CD8-positive, alpha-beta T cell (primary cell): ENCODE measurements at regions of chr6 and their contacts with region 1.

Region 1: GRCh38 chr6:43059168-43060033 is at the starts of genes KLC4 and MRPL2:
- DNase-seq: peak; percentile 94 to 99 (median 98)
- ATAC-seq: peak; percentile 97
- H3K4me3 ChIP-seq: peak within 1 kb of the TSS; percentile 81 to 96
- H3K4me3 Mint-ChIP-seq: peak within 1 kb of the TSS; percentile 95
- H3K27ac ChIP-seq: peak within 1 kb of the TSS; percentile 84 to 91
- H3K27ac Mint-ChIP-seq: peak within 1 kb of the TSS; percentile 99
- H3K4me1 ChIP-seq: peaks cover 19% of the 10 kb centered on the region
- H3K4me1 Mint-ChIP-seq: peaks cover 44% of the 10 kb centered on the region
- H3K27me3 ChIP-seq: no peaks in the 10 kb centered on the region
- H3K27me3 Mint-ChIP-seq: no peaks in the 10 kb centered on the region
- CTCF ChIP-seq: no peak
- total RNA-seq, gene KLC4: 42.1 to 57.4 TPM
- total RNA-seq, gene MRPL2: 38.9 to 41.6 TPM

Region 2: GRCh38 chr6:41072676-41073623 is 1986.5 kb before region 1 on chr6 and contains the start of gene NFYA:
- CTCF ChIA-PET with region 1: no interaction called
- POLR2A ChIA-PET with region 1: no interaction called
- intact Hi-C with region 1: loop called in 1 of 2 experiments (anchors 5 kb)
- DNase-seq: peak; percentile 99 to 100 (median 100)
- ATAC-seq: peak; percentile 70
- H3K4me3 ChIP-seq: peak within 1 kb of the TSS; percentile 72 to 86
- H3K4me3 Mint-ChIP-seq: peak within 1 kb of the TSS; percentile 92
- H3K27ac ChIP-seq: peak within 1 kb of the TSS; percentile 88 to 89
- H3K27ac Mint-ChIP-seq: peak within 1 kb of the TSS; percentile 95
- H3K4me1 ChIP-seq: peaks cover 37% of the 10 kb centered on the region
- H3K4me1 Mint-ChIP-seq: peaks cover 55% of the 10 kb centered on the region
- H3K27me3 ChIP-seq: no peaks in the 10 kb centered on the region
- H3K27me3 Mint-ChIP-seq: no peaks in the 10 kb centered on the region
- CTCF ChIP-seq: peak; percentile 46
- total RNA-seq, gene NFYA: 31.7 to 32.7 TPM

Region 3: GRCh38 chr6:42901536-42901957 is 157.9 kb before region 1 on chr6:
- CTCF ChIA-PET with region 1: interaction called, 4 read pairs
- POLR2A ChIA-PET with region 1: no interaction called
- intact Hi-C with region 1: loop called in 1 of 2 experiments (anchors 5 kb)
- DNase-seq: peak; percentile 32 to 89 (median 67)
- ATAC-seq: peak; percentile 100
- H3K4me3 ChIP-seq: no peak overlapping the region
- H3K4me3 Mint-ChIP-seq: peak overlapping the region; percentile 63
- H3K27ac ChIP-seq: no peak overlapping the region
- H3K27ac Mint-ChIP-seq: no peak overlapping the region
- H3K4me1 ChIP-seq: peaks cover 6% of the 10 kb centered on the region
- H3K4me1 Mint-ChIP-seq: peaks cover 17% of the 10 kb centered on the region
- H3K27me3 ChIP-seq: no peaks in the 10 kb centered on the region
- H3K27me3 Mint-ChIP-seq: no peaks in the 10 kb centered on the region
- CTCF ChIP-seq: peak; percentile 92

Region 4: GRCh38 chr6:42978839-42979522 is 80.4 kb before region 1 on chr6 and contains the start of gene PEX6:
- CTCF ChIA-PET with region 1: no interaction called
- POLR2A ChIA-PET with region 1: interaction called, 17 read pairs
- intact Hi-C with region 1: loop called (anchors 1 kb)
- DNase-seq: peak; percentile 77 to 98 (median 94)
- ATAC-seq: peak; percentile 89
- H3K4me3 ChIP-seq: peak within 1 kb of the TSS; percentile 49 to 71
- H3K4me3 Mint-ChIP-seq: peak within 1 kb of the TSS; percentile 90
- H3K27ac ChIP-seq: peak within 1 kb of the TSS; percentile 64 to 89
- H3K27ac Mint-ChIP-seq: peak within 1 kb of the TSS; percentile 95
- H3K4me1 ChIP-seq: peaks cover 45% of the 10 kb centered on the region
- H3K4me1 Mint-ChIP-seq: peaks cover 55% of the 10 kb centered on the region
- H3K27me3 ChIP-seq: no peaks in the 10 kb centered on the region
- H3K27me3 Mint-ChIP-seq: no peaks in the 10 kb centered on the region
- CTCF ChIP-seq: no peak
- total RNA-seq, gene PEX6: 6.7 to 6.8 TPM

Region 5: DNA sequence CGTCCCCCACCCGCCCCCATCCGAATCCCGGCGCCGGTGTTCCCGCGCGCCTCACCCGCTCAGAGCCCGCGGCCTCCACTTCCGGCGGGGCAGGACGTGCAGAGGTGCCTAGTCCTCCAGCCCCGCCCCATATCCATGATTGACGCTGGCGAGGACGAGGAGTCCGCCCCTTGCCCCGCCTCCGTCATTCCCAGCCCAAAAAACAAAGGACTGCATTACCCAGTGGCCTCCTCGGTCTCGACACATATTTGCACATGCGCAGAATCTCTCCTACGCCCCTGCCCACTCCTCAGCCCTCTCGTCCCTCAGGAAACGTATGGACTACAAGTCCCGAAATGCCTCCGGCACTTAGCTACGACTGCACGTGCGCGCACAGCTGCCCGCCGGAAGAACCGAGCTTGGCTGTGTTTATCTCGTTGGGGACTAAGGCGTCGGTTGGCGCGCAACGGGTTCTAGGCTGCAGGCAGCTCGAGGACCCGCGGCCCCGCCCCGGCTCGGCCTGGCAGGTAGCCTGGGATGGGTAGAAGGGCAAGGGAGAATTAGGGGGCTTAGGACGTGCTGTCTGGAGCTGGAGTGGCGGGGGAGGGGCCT is 45.5 kb before region 1 on chr6 and contains the starts of genes KLHDC3 and MEA1:
- CTCF ChIA-PET with region 1: interaction called, 4 read pairs
- POLR2A ChIA-PET with region 1: interaction called, 14 read pairs
- intact Hi-C with region 1: loop called (anchors 1 kb)
- DNase-seq: peak; percentile 95 to 100 (median 98)
- ATAC-seq: peak; percentile 96
- H3K4me3 ChIP-seq: peak within 1 kb of the TSS; percentile 79 to 84
- H3K4me3 Mint-ChIP-seq: peak within 1 kb of the TSS; percentile 95
- H3K27ac ChIP-seq: peak within 1 kb of the TSS; percentile 60 to 74
- H3K27ac Mint-ChIP-seq: peak within 1 kb of the TSS; percentile 94
- H3K4me1 ChIP-seq: peaks cover 29% of the 10 kb centered on the region
- H3K4me1 Mint-ChIP-seq: peaks cover 63% of the 10 kb centered on the region
- H3K27me3 ChIP-seq: no peaks in the 10 kb centered on the region
- H3K27me3 Mint-ChIP-seq: no peaks in the 10 kb centered on the region
- CTCF ChIP-seq: no peak
- total RNA-seq, gene KLHDC3: 20.9 to 21.7 TPM
- total RNA-seq, gene MEA1: 14.5 to 15.3 TPM

Region 6: GRCh38 chr6:43355862-43356590 is 296.6 kb after region 1 on chr6:
- CTCF ChIA-PET with region 1: no interaction called
- POLR2A ChIA-PET with region 1: no interaction called
- intact Hi-C with region 1: no loop called
- DNase-seq: no peak
- ATAC-seq: peak; percentile 34
- H3K4me3 ChIP-seq: no peak overlapping the region
- H3K4me3 Mint-ChIP-seq: no peak overlapping the region
- H3K27ac ChIP-seq: no peak overlapping the region
- H3K27ac Mint-ChIP-seq: no peak overlapping the region
- H3K4me1 ChIP-seq: no peaks in the 10 kb centered on the region
- H3K4me1 Mint-ChIP-seq: peaks cover 3% of the 10 kb centered on the region
- H3K27me3 ChIP-seq: no peaks in the 10 kb centered on the region
- H3K27me3 Mint-ChIP-seq: no peaks in the 10 kb centered on the region
- CTCF ChIP-seq: no peak

Region 7: GRCh38 chr6:43506667-43507471 is 447.5 kb after region 1 on chr6:
- CTCF ChIA-PET with region 1: no interaction called
- POLR2A ChIA-PET with region 1: no interaction called
- intact Hi-C with region 1: loop called in 1 of 2 experiments (anchors 5 kb)
- DNase-seq: peak; percentile 64 to 89 (median 80)
- ATAC-seq: peak; percentile 74
- H3K4me3 ChIP-seq: no peak overlapping the region
- H3K4me3 Mint-ChIP-seq: no peak overlapping the region
- H3K27ac ChIP-seq: no peak overlapping the region
- H3K27ac Mint-ChIP-seq: peak overlapping the region; percentile 18
- H3K4me1 ChIP-seq: peaks cover 14% of the 10 kb centered on the region
- H3K4me1 Mint-ChIP-seq: peaks cover 14% of the 10 kb centered on the region
- H3K27me3 ChIP-seq: peaks cover 0 to 13% of the 10 kb centered on the region in 2 experiments
- H3K27me3 Mint-ChIP-seq: peaks cover 16% of the 10 kb centered on the region
- CTCF ChIP-seq: peak; percentile 87

Region 8: DNA sequence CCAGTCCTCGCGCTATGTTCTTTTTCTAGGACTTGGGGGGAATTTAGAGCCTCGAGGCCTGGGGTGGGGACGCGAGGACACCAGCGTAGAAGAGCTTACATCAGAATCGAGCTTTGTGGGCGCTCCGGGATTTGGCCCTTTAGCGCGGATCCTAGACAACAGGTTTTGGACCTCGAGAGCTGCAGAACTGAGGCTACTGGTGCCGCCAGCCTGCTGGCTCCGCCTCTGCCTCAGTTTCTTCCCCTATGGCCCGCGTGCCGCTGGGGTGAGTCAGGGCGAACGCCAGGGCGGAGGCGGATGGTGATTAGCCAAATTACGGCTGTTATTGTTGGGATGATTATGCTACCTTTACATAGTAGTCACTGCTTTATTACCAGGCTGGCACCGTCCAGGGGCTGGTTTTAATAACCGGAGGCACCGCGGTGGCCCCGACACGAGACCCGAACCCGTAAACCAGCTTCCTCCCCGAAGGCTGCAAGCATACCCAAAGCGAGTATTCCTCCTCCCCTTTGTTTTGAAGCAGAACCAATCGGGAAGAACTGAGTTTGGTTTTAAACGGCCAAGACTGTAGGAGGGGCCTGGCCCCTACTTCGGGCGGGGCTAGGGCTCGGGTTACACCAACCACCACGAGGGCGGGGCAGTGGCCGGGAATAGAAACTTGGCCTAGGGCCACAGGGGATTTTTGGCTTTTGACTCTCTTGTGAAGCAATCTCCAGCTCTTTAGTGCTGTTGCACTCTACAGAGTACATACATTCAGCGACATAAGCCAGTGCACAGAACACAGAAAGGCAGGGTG is 570.3 kb after region 1 on chr6:
- CTCF ChIA-PET with region 1: no interaction called
- POLR2A ChIA-PET with region 1: no interaction called
- intact Hi-C with region 1: loop called (anchors 2 to 10 kb)
- DNase-seq: peak; percentile 66 to 96 (median 84)
- ATAC-seq: peak; percentile 51
- H3K4me3 ChIP-seq: peak overlapping the region; percentile 77 to 82
- H3K4me3 Mint-ChIP-seq: peak overlapping the region; percentile 98
- H3K27ac ChIP-seq: peak overlapping the region; percentile 53 to 75
- H3K27ac Mint-ChIP-seq: peak overlapping the region; percentile 95
- H3K4me1 ChIP-seq: peaks cover 15% of the 10 kb centered on the region
- H3K4me1 Mint-ChIP-seq: peaks cover 39% of the 10 kb centered on the region
- H3K27me3 ChIP-seq: no peaks in the 10 kb centered on the region
- H3K27me3 Mint-ChIP-seq: no peaks in the 10 kb centered on the region
- CTCF ChIP-seq: no peak